ENCODE measurements at regions of chr1 and their contacts with region 1.

Region 1: DNA sequence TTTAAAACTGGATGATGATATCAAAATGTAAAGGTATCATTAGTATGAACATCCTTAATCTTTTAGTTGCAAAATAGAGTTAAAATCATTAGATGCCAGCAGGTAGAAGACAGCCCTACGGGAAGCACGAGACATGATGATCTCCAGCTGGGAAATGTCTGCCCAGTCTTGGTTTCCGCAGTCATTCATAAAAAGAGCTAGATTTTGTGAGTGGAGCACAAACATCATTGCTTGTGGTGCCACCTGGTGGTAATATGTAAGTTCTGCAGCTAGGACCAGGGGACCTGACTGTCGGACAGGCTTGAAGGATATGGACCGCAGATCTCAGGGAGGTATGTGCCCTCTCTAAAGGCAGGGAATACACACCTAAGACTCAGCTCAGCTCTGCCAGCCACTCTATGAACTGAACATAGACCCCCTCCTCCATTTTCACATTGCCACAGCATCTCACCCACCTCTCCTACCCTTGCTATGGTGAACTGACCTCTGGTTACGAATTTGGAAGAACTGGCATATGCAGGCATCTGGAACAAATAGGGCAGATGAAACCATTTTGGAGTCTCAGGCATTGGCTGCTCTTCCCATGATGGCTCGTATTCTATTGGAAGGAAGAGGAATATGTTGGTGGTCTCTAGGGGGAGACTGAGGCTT is 9.2 kb downstream of the FCMR start:
- DNase-seq: peak; percentile 64
- ATAC-seq: peak; percentile 57
- H3K4me3 ChIP-seq: no peak overlapping the region
- H3K27ac ChIP-seq: no peak overlapping the region
- H3K4me1 ChIP-seq: peaks cover 0 to 20% of the 10 kb centered on the region in 2 experiments; a peak in 2 of 4 replicates
- H3K27me3 ChIP-seq: no peaks in the 10 kb centered on the region; the same call in 1 of the 2 replicates
- CTCF ChIP-seq: peak; percentile 78 to 80 (median 79)
- POLR2A ChIP-seq: no peak
- RAD21 ChIP-seq: peak; percentile 88

Region 2: DNA sequence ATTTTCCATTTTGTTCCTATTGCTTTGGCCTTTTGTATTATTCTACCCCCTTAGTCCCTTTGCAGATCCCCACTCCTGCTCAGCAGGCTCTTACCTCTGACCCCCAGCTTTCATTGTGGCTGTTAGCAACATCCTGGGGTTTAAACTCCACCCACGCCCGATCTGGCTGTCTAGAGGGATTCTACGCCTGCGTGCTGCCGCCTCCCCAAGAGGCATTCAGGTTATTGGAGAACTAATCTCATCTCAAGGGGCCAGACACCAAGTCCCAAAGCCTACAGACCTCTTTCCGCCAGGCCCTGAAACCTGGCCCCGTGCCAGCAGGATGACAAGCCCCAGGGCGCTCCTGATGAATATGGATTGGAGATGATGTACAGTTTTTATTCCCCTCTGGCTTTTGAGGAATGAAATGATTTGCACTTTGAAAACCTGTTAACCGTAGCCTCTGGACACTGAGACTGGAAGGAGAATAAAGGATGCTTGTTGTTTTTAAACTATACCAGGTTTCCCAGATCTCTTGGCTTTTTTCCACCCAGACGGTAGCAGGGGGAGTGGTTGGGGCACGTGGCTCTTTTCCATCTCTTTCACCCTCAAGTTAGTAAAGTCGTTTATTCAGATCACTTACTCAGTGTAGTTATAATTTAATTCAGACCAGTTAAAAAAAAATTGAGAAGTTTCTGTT is 456.8 kb before region 1 on chr1:
- CTCF ChIA-PET with region 1: no interaction called
- POLR2A ChIA-PET with region 1: no interaction called
- RAD21 ChIA-PET with region 1: no interaction called
- intact Hi-C with region 1: no loop called
- DNase-seq: no peak
- ATAC-seq: no peak
- H3K4me3 ChIP-seq: no peak overlapping the region
- H3K27ac ChIP-seq: no peak overlapping the region
- H3K4me1 ChIP-seq: peaks cover 0 to 12% of the 10 kb centered on the region in 2 experiments; a peak in 1 of 4 replicates
- H3K27me3 ChIP-seq: no peaks in the 10 kb centered on the region
- CTCF ChIP-seq: no peak
- POLR2A ChIP-seq: no peak
- RAD21 ChIP-seq: no peak

Region 3: GRCh38 chr1:206489980-206490770 is 422.4 kb before region 1 on chr1:
- CTCF ChIA-PET with region 1: interaction called, 10 read pairs
- POLR2A ChIA-PET with region 1: no interaction called
- RAD21 ChIA-PET with region 1: no interaction called
- intact Hi-C with region 1: no loop called
- DNase-seq: no peak
- ATAC-seq: peak; percentile 96
- H3K4me3 ChIP-seq: no peak overlapping the region
- H3K27ac ChIP-seq: no peak overlapping the region
- H3K4me1 ChIP-seq: no peaks in the 10 kb centered on the region
- H3K27me3 ChIP-seq: no peaks in the 10 kb centered on the region
- CTCF ChIP-seq: peak; percentile 94 to 98 (median 94)
- POLR2A ChIP-seq: no peak
- RAD21 ChIP-seq: peak; percentile 99

Region 4: DNA sequence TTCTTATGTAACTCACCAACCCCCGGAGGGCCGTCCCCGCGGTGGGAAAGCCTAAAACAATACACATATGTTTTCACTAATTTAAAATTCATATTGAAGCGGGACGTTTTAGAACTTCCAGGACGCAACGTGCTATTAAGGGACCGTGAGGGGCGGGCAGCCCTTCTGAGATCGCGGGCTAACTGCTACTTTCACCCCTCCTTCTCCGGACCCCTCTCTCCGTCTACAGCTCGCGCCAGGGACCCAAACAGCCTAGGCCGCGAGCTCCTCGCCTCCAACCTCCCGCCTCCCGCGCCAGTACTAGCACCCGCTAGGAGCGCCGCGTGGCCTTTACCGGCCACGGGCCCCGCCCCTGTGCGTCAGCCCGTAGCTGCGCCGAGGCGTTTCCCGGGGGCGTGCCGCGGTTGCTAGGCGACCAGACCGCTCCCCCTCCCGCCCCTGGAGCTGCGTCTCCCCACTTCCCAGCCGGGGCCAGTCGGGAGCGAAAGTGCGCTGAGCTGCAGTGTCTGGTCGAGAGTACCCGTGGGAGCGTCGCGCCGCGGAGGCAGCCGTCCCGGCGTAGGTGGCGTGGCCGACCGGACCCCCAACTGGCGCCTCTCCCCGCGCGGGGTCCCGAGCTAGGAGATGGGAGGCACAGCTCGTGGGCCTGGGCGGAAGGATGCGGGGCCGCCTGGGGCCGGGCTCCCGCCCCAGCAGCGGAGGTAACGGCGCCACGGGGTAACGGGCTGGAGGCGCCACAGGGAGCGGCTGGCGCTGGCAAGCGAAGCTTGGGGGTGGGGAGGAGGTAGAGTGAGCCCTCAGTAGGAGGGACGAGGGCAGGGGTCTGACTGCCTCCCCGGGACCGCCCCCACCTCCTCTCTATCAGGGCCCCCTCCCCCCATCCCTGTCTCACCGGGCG is 277.2 kb before region 1 on chr1 and contains the start of gene DYRK3:
- CTCF ChIA-PET with region 1: interaction called, 11 read pairs
- POLR2A ChIA-PET with region 1: no interaction called
- RAD21 ChIA-PET with region 1: no interaction called
- intact Hi-C with region 1: no loop called
- DNase-seq: peak; percentile 72
- ATAC-seq: peak; percentile 91
- H3K4me3 ChIP-seq: peak within 1 kb of the TSS; percentile 67 to 78
- H3K27ac ChIP-seq: peak within 1 kb of the TSS; percentile 32; the same call in 1 of the 2 replicates
- H3K4me1 ChIP-seq: peaks cover 4 to 26% of the 10 kb centered on the region in 2 experiments; a peak in 3 of 4 replicates
- H3K27me3 ChIP-seq: no peaks in the 10 kb centered on the region
- CTCF ChIP-seq: no peak
- POLR2A ChIP-seq: peak; percentile 89
- RAD21 ChIP-seq: no peak
- total RNA-seq, gene DYRK3: 7.1 TPM

Region 5: GRCh38 chr1:206734499-206735142 is 177.9 kb before region 1 on chr1:
- CTCF ChIA-PET with region 1: interaction called, 28 read pairs
- POLR2A ChIA-PET with region 1: no interaction called
- RAD21 ChIA-PET with region 1: interaction called, 5 to 6 read pairs
- intact Hi-C with region 1: no loop called
- DNase-seq: peak; percentile 12
- ATAC-seq: peak; percentile 74
- H3K4me3 ChIP-seq: no peak overlapping the region
- H3K27ac ChIP-seq: no peak overlapping the region
- H3K4me1 ChIP-seq: no peaks in the 10 kb centered on the region
- H3K27me3 ChIP-seq: no peaks in the 10 kb centered on the region
- CTCF ChIP-seq: peak; percentile 55 to 78 (median 74)
- POLR2A ChIP-seq: no peak
- RAD21 ChIP-seq: peak; percentile 67

Region 6: DNA sequence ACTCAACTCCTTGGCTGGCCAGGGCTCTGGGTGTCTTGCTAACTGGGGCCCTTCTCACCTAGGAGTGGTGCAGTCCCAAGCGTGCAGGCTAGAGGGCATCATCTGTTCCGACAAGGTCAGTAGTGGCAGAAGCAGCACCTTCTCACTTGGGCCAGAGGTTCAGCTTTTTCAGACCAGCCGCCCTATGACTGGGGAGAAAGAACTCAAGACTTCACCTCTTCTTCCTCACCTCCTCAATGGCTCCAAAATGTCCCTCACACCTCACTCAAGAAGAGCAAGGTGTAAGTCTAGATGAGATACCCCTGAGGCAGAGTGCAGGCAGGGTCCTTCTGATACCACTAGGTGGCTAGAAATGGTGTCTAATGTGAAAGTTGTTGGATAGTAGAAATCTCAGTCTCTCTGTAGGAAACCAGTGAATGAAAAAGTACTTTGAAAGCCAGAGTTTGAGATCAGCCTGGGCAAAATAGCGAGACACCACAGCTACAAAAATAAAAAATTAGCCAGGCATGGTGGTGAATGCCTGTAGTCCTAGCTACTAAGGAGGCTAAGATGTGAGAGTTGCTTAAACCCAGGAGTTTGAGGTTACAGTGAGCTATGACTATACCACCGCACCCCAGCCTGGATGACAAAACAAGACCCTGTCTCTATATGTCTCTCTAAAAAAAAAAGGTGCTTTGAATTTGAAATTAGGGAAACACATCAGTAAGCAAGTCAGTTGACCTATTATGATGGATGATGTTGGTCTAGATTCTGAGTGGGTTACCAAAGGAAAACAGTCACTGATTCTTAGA is 55.7 kb before region 1 on chr1:
- CTCF ChIA-PET with region 1: interaction called, 4 read pairs
- POLR2A ChIA-PET with region 1: no interaction called
- RAD21 ChIA-PET with region 1: interaction called in 1 of 2 experiments, 4 read pairs
- intact Hi-C with region 1: loop called (anchors 2 kb)
- DNase-seq: peak; percentile 16
- ATAC-seq: peak; percentile 95
- H3K4me3 ChIP-seq: no peak overlapping the region
- H3K27ac ChIP-seq: no peak overlapping the region
- H3K4me1 ChIP-seq: no peaks in the 10 kb centered on the region
- H3K27me3 ChIP-seq: no peaks in the 10 kb centered on the region
- CTCF ChIP-seq: peak; percentile 65 to 86 (median 68); a peak in 5 of 6 replicates
- POLR2A ChIP-seq: no peak
- RAD21 ChIP-seq: peak; percentile 34; the same call in 1 of the 2 replicates

Region 7: GRCh38 chr1:206935491-206936067 is 23.0 kb after region 1 on chr1:
- CTCF ChIA-PET with region 1: interaction called, 15 read pairs
- POLR2A ChIA-PET with region 1: no interaction called
- RAD21 ChIA-PET with region 1: no interaction called
- intact Hi-C with region 1: no loop called
- DNase-seq: no peak
- ATAC-seq: peak; percentile 84
- H3K4me3 ChIP-seq: no peak overlapping the region
- H3K27ac ChIP-seq: no peak overlapping the region
- H3K4me1 ChIP-seq: no peaks in the 10 kb centered on the region
- H3K27me3 ChIP-seq: no peaks in the 10 kb centered on the region
- CTCF ChIP-seq: peak; percentile 77 to 90 (median 87)
- POLR2A ChIP-seq: no peak
- RAD21 ChIP-seq: peak; percentile 47